Mucosa of descending colon (tissue), 3 donors: ENCODE measurements at regions of chr9 and their contacts with region 1.

Region 1: DNA sequence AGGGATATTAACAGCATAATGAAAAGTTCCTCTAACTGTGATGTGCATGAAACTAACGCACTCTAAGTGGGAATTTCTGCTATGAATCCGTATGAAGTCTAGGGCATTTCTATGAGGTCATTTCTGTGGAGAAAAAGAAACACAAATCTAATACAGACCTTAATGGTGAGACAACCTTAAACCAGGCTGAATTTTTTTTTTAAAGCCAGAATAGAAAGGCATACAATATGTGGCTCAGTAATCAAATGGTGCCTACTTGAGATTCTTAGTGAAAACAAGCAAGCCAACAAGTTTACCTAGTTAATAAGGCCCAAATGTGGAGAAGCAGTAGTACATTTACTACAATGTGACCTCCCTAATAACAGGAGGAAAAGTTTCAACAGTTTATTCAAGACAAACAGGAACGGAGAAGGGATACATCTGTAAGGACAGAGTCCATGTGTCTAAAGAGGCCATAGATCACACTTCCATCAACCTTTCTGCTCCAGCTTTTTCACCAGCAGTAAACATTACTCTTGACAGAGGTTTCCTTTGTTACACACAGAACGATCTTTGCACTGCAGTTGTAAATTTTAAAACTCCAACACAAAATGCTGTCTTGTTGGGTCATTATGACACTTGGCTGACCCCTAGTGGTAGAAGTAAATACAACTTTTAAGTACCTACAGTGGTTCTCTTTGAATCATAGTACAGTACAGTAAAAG is 26.2 kb downstream of the CARNMT1 start:
- DNase-seq: peak in 1 of 3 donors; percentile 45
- ATAC-seq: peak; percentile 99
- H3K4me3 ChIP-seq: no peak overlapping the region
- H3K4me1 ChIP-seq: peaks cover 14% of the 10 kb centered on the region
- CTCF ChIP-seq: peak; percentile 60

Region 2: GRCh38 chr9:74773886-74774479 is 227.9 kb before region 1 on chr9:
- intact Hi-C with region 1: loop called (anchors 5 kb)
- DNase-seq: peak; percentile 68 to 92 (median 82)
- ATAC-seq: peak; percentile 90
- H3K4me3 ChIP-seq: no peak overlapping the region
- H3K4me1 ChIP-seq: no peaks in the 10 kb centered on the region
- CTCF ChIP-seq: peak; percentile 71

Region 3: GRCh38 chr9:74875656-74876413 is 126.0 kb before region 1 on chr9:
- intact Hi-C with region 1: no loop called
- DNase-seq: no peak
- ATAC-seq: no peak
- H3K4me3 ChIP-seq: no peak overlapping the region
- H3K4me1 ChIP-seq: peaks cover 5% of the 10 kb centered on the region
- CTCF ChIP-seq: no peak

Region 4: DNA sequence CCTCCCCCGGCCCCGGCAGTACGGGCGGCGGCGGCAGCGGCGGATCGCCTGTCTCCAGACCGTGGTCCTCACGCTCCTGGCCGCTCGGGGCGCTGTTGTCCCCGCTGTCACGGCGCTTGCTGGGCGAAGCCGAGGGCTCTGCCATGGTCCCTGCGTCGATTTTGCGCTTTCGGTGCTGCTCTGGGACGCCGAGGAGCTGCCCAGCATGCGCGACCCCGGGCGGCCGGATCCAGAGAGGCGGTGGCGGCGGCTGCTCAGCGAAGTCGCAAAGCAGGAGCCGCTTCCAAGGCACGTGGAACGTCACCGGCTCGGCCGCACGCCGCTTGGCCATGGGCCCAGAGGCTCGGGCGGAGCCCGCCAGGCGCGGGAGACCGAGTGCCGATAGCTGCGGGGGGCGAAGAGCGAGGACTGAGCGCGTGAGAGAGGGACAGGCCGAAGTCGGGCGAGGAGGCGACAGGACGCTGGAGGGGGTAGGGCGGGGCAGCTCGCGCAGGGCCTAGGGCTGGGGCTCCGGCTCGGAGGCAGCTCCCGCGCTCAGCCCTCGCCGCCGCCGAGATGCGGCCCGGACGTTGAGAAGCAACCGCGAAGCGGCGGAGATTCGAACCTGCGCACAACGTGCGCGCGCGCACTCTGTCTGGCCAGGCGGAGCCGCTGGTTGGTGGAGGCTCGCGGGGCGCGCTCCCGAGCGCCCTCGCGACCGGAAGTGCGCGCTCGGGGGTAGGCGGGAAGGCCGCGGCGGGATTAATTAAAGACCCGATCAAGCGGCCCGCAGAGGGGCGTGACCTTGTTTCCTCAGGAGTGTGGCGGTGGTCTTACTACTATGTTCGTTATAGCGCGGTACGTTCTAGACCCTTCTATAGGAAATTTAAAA is 49.4 kb before region 1 on chr9 and contains the start of gene C9orf40:
- intact Hi-C with region 1: loop called in 1 of 2 experiments (anchors 10 kb)
- DNase-seq: peak; percentile 94 to 97 (median 95)
- ATAC-seq: peak; percentile 98
- H3K4me3 ChIP-seq: peak within 1 kb of the TSS; percentile 79
- H3K4me1 ChIP-seq: no peaks in the 10 kb centered on the region
- CTCF ChIP-seq: peak; percentile 86
- total RNA-seq, gene C9orf40: 7.8 to 8.9 (median 7.8) TPM